ENCODE measurements at regions of chr5 and their contacts with region 1.

Region 1: GRCh38 chr5:139711067-139711905 is 63.1 kb downstream of the CXXC5 start:
- H3K4me3 ChIP-seq: peak overlapping the region; percentile 41
- H3K27ac ChIP-seq: peak overlapping the region; percentile 29; the same call in 1 of the 2 replicates
- H3K4me1 ChIP-seq: 0 out of 2 replicates have a peak, but pooled peaks cover 3% of the 10 kb centered on the region
- CTCF ChIP-seq: peak; percentile 21; the same call in 1 of the 2 replicates

Region 2: GRCh38 chr5:139670369-139671095 is 40.8 kb before region 1 on chr5:
- CTCF ChIA-PET with region 1: no interaction called
- POLR2A ChIA-PET with region 1: no interaction called
- H3K4me3 ChIP-seq: no peak overlapping the region
- H3K27ac ChIP-seq: no peak overlapping the region
- H3K4me1 ChIP-seq: peaks cover 4% of the 10 kb centered on the region; the same call in 1 of the 2 replicates
- CTCF ChIP-seq: peak; percentile 35; the same call in 1 of the 2 replicates

Region 3: DNA sequence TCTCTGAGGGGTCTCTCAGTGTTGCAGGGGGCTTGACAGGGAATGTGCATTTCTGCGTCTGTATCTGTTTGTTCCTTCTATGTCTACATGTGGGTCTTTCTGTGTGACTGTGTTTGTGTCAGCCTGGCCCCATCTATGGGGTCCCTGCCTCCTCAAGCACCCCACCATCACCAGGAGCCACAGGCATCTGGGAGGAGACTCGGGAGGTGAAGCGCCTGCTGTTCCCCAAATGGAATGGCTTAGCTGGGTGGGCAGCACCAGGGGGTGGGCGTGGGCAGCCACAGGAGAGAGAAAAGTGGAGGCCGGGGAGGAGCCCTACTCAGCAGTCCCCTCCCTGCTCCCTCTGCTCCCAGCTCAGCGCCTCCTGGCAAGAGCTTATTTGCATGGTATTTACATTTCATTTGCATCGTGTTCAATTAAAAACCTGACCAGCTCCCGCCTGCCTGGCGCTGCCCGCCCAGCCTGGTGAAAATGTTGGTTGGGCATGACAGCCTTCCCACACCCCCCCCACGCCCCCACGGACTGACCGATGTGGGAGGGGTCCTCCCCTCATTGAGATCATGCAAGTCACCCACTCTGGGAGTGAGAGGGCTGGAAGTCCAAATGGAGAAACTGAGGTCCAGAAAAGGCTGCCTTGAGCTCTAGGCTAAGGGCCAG is 12.7 kb before region 1 on chr5:
- CTCF ChIA-PET with region 1: interaction called, 5 read pairs
- POLR2A ChIA-PET with region 1: interaction called, 16 read pairs
- H3K4me3 ChIP-seq: no peak overlapping the region
- H3K27ac ChIP-seq: no peak overlapping the region
- H3K4me1 ChIP-seq: peaks cover 6% of the 10 kb centered on the region; the same call in 1 of the 2 replicates
- CTCF ChIP-seq: no peak

Region 4: GRCh38 chr5:139745800-139746690 is 34.8 kb after region 1 on chr5:
- CTCF ChIA-PET with region 1: no interaction called
- POLR2A ChIA-PET with region 1: interaction called, 25 read pairs
- H3K4me3 ChIP-seq: peak overlapping the region; percentile 17
- H3K27ac ChIP-seq: peak overlapping the region; percentile 67
- H3K4me1 ChIP-seq: peaks cover 16% of the 10 kb centered on the region
- CTCF ChIP-seq: no peak